ENCODE measurements at regions of chr1 and their contacts with region 1.

Region 1: GRCh38 chr1:91803847-91804545 is 82.0 kb downstream of the TGFBR3 start:
- DNase-seq: peak; percentile 91
- H3K4me3 Mint-ChIP-seq: peak overlapping the region; percentile 78
- H3K27ac Mint-ChIP-seq: peak overlapping the region; percentile 95
- H3K4me1 Mint-ChIP-seq: peaks cover 45% of the 10 kb centered on the region
- H3K27me3 Mint-ChIP-seq: peaks cover 12% of the 10 kb centered on the region

Region 2: GRCh38 chr1:91523482-91523881 is 280.5 kb before region 1 on chr1:
- intact Hi-C with region 1: loop called (anchors 1 kb)
- DNase-seq: peak; percentile 71
- H3K4me3 Mint-ChIP-seq: no peak overlapping the region
- H3K27ac Mint-ChIP-seq: peak overlapping the region; percentile 22
- H3K4me1 Mint-ChIP-seq: peaks cover 28% of the 10 kb centered on the region
- H3K27me3 Mint-ChIP-seq: no peaks in the 10 kb centered on the region

Region 3: DNA sequence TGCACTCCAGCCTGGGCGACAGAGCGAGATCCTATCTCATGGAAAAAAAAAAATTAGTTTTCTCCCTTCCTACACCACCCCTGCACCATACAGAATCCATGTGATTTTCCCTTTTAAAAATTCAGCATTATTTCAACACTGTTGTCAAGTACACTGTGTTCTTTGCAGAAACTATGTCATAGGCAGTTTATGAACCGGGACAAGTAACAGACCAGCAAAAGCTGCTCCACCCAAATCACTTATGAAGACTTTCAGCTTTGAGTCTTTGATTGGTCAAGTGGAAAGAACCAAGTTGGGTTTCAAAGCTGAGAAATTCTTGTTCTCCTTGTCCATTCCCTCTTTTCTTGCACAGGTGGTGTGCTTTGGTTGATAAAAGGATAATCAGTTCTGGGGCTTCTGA is 130.4 kb before region 1 on chr1:
- intact Hi-C with region 1: loop called (anchors 5 kb)
- DNase-seq: no peak
- H3K4me3 Mint-ChIP-seq: no peak overlapping the region
- H3K27ac Mint-ChIP-seq: peak overlapping the region; percentile 88
- H3K4me1 Mint-ChIP-seq: peaks cover 33% of the 10 kb centered on the region
- H3K27me3 Mint-ChIP-seq: no peaks in the 10 kb centered on the region

Region 4: GRCh38 chr1:91712981-91713841 is 90.8 kb before region 1 on chr1:
- intact Hi-C with region 1: loop called (anchors 1 kb)
- DNase-seq: peak; percentile 85
- H3K4me3 Mint-ChIP-seq: peak overlapping the region; percentile 55
- H3K27ac Mint-ChIP-seq: peak overlapping the region; percentile 88
- H3K4me1 Mint-ChIP-seq: peaks cover 35% of the 10 kb centered on the region
- H3K27me3 Mint-ChIP-seq: no peaks in the 10 kb centered on the region

Region 5: GRCh38 chr1:91876040-91876470 is 72.1 kb after region 1 on chr1:
- intact Hi-C with region 1: loop called (anchors 1 kb)
- DNase-seq: no peak
- H3K4me3 Mint-ChIP-seq: peak overlapping the region; percentile 44
- H3K27ac Mint-ChIP-seq: peak overlapping the region; percentile 13
- H3K4me1 Mint-ChIP-seq: peaks cover 58% of the 10 kb centered on the region
- H3K27me3 Mint-ChIP-seq: peaks cover 12% of the 10 kb centered on the region

Region 6: DNA sequence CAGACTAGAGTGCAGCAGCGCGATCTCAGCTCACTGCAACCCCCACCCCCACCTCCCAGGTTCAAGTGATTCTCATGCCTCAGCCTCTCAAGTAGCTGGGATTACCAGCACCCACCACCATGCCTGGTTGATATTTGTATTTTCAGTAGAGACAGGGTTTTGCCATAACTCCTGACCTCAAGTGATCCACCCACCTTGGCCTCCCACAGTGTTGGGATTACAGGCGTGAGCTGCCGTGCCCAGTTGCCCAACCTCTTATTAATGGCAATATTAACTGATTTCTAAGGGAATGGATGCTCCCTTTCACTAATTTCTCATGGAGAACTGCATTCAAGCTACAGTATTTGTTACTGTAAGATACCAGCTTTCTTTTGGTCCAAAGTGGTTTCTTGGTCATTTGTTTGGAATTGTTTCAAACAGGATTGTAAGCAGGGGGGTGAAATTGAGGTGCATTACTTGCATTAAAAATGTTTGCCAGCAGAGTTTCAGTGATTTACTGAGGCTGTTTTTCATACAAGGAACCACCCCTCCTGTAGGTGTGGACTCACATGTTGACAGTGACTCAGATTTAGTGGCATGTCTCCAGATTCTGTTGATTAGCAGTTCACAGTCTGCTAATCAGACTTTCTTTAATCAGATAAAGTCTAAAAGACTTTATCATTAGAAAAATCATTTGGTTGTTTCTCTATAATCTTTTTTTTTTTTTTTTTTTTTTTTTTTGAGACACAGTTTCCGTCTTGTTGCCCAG is 85.9 kb after region 1 on chr1:
- intact Hi-C with region 1: no loop called
- DNase-seq: no peak
- H3K4me3 Mint-ChIP-seq: no peak overlapping the region
- H3K27ac Mint-ChIP-seq: no peak overlapping the region
- H3K4me1 Mint-ChIP-seq: peaks cover 18% of the 10 kb centered on the region
- H3K27me3 Mint-ChIP-seq: peaks cover 21% of the 10 kb centered on the region

Measured in activated CD4-positive, alpha-beta T cell treated with anti-CD3 and anti-CD28 coated beads, Interleukin-2, amount 10 ng/mL, durations not matched to agents 24 days and 14 days (primary cell).